ENCODE measurements at regions of chr22 and their contacts with region 1.

Region 1: GRCh38 chr22:17368554-17369438 is 464 bp upstream of the CECR2 start:
- DNase-seq: peak; percentile 60 to 84
- H3K4me3 ChIP-seq: peak overlapping the region; percentile 65 to 92 (median 81)
- H3K27ac ChIP-seq: peak overlapping the region; percentile 91
- H3K4me1 ChIP-seq: peaks cover under 1 to 15% (median 6%) of the 10 kb centered on the region in 4 experiments; a peak in 6 of 7 replicates
- H3K27me3 ChIP-seq: no peaks in the 10 kb centered on the region
- CTCF ChIP-seq: no peak
- EP300 ChIP-seq: peak in 1 of 2 experiments; percentile 89; a peak in 2 of 3 replicates
- POLR2A ChIP-seq: peak; percentile 18 to 85
- RAD21 ChIP-seq: peak in 1 of 2 experiments; percentile 3; a peak in 2 of 4 replicates

Region 2: GRCh38 chr22:17381237-17381914 is 12.6 kb after region 1 on chr22:
- CTCF ChIA-PET with region 1: no interaction called
- POLR2A ChIA-PET with region 1: interaction called, 30 read pairs
- DNase-seq: no peak
- H3K4me3 ChIP-seq: peak overlapping the region; percentile 4 to 45 (median 20); a peak in 6 of 8 replicates
- H3K27ac ChIP-seq: peak overlapping the region; percentile 49; the same call in 1 of the 2 replicates
- H3K4me1 ChIP-seq: peaks cover 14 to 42% (median 29%) of the 10 kb centered on the region in 4 experiments
- H3K27me3 ChIP-seq: no peaks in the 10 kb centered on the region
- CTCF ChIP-seq: no peak
- EP300 ChIP-seq: no peak
- POLR2A ChIP-seq: no peak
- RAD21 ChIP-seq: no peak

Region 3: GRCh38 chr22:17501679-17502285 is 133.0 kb after region 1 on chr22:
- CTCF ChIA-PET with region 1: interaction called, 24 read pairs
- POLR2A ChIA-PET with region 1: no interaction called
- DNase-seq: no peak
- H3K4me3 ChIP-seq: no peak overlapping the region
- H3K27ac ChIP-seq: no peak overlapping the region
- H3K4me1 ChIP-seq: no peaks in the 10 kb centered on the region
- H3K27me3 ChIP-seq: no peaks in the 10 kb centered on the region
- CTCF ChIP-seq: peak in 2 of 3 experiments; percentile 52 to 63; a peak in 2 of 4 replicates
- EP300 ChIP-seq: no peak
- POLR2A ChIP-seq: no peak
- RAD21 ChIP-seq: peak; percentile 90 to 91

Region 4: DNA sequence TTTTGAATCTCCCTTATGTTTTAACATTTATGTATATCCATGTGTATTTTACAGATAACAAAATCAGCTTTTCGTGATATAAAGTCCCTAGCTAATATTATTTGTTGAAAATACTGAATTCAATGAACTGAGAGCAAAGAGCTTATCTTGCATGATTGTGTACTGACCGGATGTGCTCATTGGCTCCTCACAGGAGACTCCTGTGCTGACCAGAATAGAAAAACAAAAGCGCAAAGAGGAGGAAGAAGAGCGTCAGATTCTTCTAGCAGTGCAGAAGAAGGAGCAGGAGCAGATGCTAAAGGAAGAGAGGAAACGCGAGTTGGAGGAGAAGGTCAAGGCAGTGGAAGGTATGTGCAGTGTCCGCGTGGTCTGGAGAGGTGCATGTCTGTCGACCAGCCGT is 155.1 kb after region 1 on chr22:
- CTCF ChIA-PET with region 1: no interaction called
- POLR2A ChIA-PET with region 1: no interaction called
- DNase-seq: no peak
- H3K4me3 ChIP-seq: no peak overlapping the region
- H3K27ac ChIP-seq: no peak overlapping the region
- H3K4me1 ChIP-seq: no peaks in the 10 kb centered on the region
- H3K27me3 ChIP-seq: no peaks in the 10 kb centered on the region
- CTCF ChIP-seq: no peak
- EP300 ChIP-seq: no peak
- POLR2A ChIP-seq: no peak
- RAD21 ChIP-seq: no peak